PC-9 (cell line): ENCODE measurements at regions of chr9 and their contacts with region 1.

Region 1: GRCh38 chr9:136429683-136430590 is 9.7 kb downstream of the INPP5E start:
- DNase-seq: no peak
- H3K4me3 ChIP-seq: no peak overlapping the region
- H3K27ac ChIP-seq: no peak overlapping the region
- H3K4me1 ChIP-seq: no peaks in the 10 kb centered on the region
- H3K27me3 ChIP-seq: no peaks in the 10 kb centered on the region
- CTCF ChIP-seq: no peak

Region 2: GRCh38 chr9:136220017-136220729 is 209.8 kb before region 1 on chr9:
- CTCF ChIA-PET with region 1: no interaction called
- POLR2A ChIA-PET with region 1: interaction called, 10 read pairs
- intact Hi-C with region 1: no loop called
- DNase-seq: peak; percentile 63 to 80
- H3K4me3 ChIP-seq: no peak overlapping the region
- H3K27ac ChIP-seq: peak overlapping the region; percentile 40
- H3K4me1 ChIP-seq: peaks cover 14% of the 10 kb centered on the region
- H3K27me3 ChIP-seq: no peaks in the 10 kb centered on the region
- CTCF ChIP-seq: no peak

Region 3: GRCh38 chr9:136385015-136385414 is 44.9 kb before region 1 on chr9:
- CTCF ChIA-PET with region 1: no interaction called
- POLR2A ChIA-PET with region 1: no interaction called
- intact Hi-C with region 1: no loop called
- DNase-seq: no peak
- H3K4me3 ChIP-seq: no peak overlapping the region
- H3K27ac ChIP-seq: no peak overlapping the region
- H3K4me1 ChIP-seq: no peaks in the 10 kb centered on the region
- H3K27me3 ChIP-seq: no peaks in the 10 kb centered on the region
- CTCF ChIP-seq: no peak

Region 4: GRCh38 chr9:136485049-136486045 is 55.4 kb after region 1 on chr9:
- CTCF ChIA-PET with region 1: no interaction called
- POLR2A ChIA-PET with region 1: no interaction called
- intact Hi-C with region 1: no loop called
- DNase-seq: peak; percentile 53 to 83
- H3K4me3 ChIP-seq: peak overlapping the region; percentile 96
- H3K27ac ChIP-seq: peak overlapping the region; percentile 97
- H3K4me1 ChIP-seq: peaks cover 15% of the 10 kb centered on the region
- H3K27me3 ChIP-seq: no peaks in the 10 kb centered on the region
- CTCF ChIP-seq: peak; percentile 91

Region 5: DNA sequence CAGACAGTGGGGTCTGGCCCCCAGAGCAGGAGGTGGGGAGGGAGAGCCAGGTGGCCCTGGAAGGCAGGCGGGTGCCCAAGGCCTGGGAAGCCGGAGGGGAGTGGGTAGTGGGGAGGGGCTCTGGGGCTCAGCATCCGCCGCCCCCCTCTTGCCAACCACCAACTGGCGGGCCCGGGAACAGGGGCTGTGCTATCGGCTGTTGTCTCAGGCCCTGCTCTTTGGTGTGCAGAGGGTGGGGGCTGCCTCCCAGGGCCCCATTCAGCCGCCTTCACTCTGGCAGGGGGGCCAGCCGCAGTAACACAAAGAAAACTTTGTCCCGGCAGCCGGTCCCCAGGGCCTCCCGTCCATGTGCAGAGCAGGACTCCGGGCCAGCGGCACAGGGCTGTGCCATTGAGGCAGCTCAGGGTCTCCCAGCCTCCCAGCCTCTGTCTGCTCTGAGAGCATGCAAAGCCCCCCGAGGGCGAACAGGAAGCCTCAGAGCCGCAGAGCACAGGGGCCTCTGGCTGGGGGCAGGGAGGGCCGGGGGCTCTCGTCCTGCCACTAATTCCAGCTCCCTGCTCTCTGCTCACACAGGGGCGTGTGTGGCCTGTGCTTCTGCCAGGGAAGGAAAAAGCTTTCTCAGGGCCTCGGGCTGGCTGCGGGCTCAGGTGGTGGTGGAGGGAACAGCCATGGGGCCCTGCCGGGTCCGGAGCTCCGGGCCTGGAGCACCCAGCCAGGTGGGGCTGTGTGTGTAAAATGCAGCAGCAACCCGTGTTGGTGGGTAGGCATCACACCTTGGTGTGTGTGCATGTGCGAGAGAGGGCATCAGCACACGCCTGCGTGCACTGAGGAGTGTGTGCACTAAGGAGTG is 170.1 kb after region 1 on chr9:
- CTCF ChIA-PET with region 1: no interaction called
- POLR2A ChIA-PET with region 1: no interaction called
- intact Hi-C with region 1: no loop called
- DNase-seq: no peak
- H3K4me3 ChIP-seq: no peak overlapping the region
- H3K27ac ChIP-seq: no peak overlapping the region
- H3K4me1 ChIP-seq: peaks cover 6% of the 10 kb centered on the region; the same call in 1 of the 2 replicates
- H3K27me3 ChIP-seq: peaks cover 21% of the 10 kb centered on the region
- CTCF ChIP-seq: no peak